ENCODE measurements at regions of chr9 and their contacts with region 1.

Region 1: DNA sequence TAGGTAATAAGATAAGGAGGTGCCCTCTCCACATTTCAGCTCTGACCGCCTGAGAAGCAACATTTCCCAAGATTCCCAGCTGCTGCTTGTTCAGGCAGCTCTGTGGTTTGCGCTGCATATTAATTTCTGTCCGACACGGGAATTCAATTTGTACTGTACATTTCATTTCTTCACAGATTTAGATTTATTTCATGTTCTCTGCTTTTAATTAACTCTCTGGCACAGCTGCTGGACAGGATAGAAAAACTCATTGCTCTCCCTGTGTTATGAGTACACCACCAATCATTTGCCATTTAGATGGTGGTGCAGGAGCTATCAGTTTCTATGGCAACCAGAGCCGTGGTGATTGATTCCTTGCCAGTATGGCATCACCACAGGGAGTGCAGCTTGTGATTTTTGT is 558.5 kb downstream of the DMRTA1 start:
- DNase-seq: no peak
- ATAC-seq: no peak
- H3K4me3 ChIP-seq: no peak overlapping the region
- H3K27ac ChIP-seq: no peak overlapping the region
- H3K4me1 ChIP-seq: no peaks in the 10 kb centered on the region
- H3K27me3 ChIP-seq: no peaks in the 10 kb centered on the region
- CTCF ChIP-seq: no peak
- EP300 ChIP-seq: no peak
- POLR2A ChIP-seq: no peak
- RAD21 ChIP-seq: no peak

Region 2: DNA sequence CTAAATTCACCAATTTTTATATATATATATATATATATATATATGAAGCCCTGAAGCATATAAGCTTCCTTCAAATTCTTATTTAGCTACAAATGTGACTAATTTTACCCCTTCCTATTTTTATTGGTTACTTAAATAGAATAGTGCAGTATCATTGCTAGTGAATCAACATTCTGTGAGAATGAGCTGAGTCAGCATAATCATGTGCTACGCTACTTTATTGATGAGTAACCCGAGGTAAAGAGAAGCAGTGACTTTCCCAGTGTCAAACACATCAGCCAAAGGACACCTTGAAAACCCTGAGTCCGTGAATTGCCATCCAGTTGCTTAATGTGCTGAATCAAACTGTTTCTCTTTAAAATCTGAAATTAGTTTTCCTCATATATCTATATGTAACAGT is 12.4 kb before region 1 on chr9:
- CTCF ChIA-PET with region 1: interaction called, 3 read pairs
- POLR2A ChIA-PET with region 1: no interaction called
- RAD21 ChIA-PET with region 1: no interaction called
- SMC1A ChIA-PET with region 1: interaction called, 13 read pairs
- in situ Hi-C with region 1: no loop called
- intact Hi-C with region 1: no loop called
- DNase-seq: no peak
- ATAC-seq: no peak
- H3K4me3 ChIP-seq: no peak overlapping the region
- H3K27ac ChIP-seq: no peak overlapping the region
- H3K4me1 ChIP-seq: no peaks in the 10 kb centered on the region
- H3K27me3 ChIP-seq: no peaks in the 10 kb centered on the region
- CTCF ChIP-seq: no peak
- EP300 ChIP-seq: no peak
- POLR2A ChIP-seq: no peak
- RAD21 ChIP-seq: no peak

Region 3: GRCh38 chr9:23123048-23123632 is 118.0 kb after region 1 on chr9:
- CTCF ChIA-PET with region 1: no interaction called
- POLR2A ChIA-PET with region 1: no interaction called
- RAD21 ChIA-PET with region 1: no interaction called
- SMC1A ChIA-PET with region 1: no interaction called
- in situ Hi-C with region 1: no loop called
- intact Hi-C with region 1: no loop called
- DNase-seq: no peak
- ATAC-seq: peak; percentile 77
- H3K4me3 ChIP-seq: no peak overlapping the region
- H3K27ac ChIP-seq: no peak overlapping the region
- H3K4me1 ChIP-seq: no peaks in the 10 kb centered on the region
- H3K27me3 ChIP-seq: no peaks in the 10 kb centered on the region
- CTCF ChIP-seq: peak; percentile 43 to 49 (median 47)
- EP300 ChIP-seq: no peak
- POLR2A ChIP-seq: no peak
- RAD21 ChIP-seq: peak; percentile 56